Breast epithelium (tissue), 4 donors: ENCODE measurements at regions of chr6 and their contacts with region 1.

Region 1: DNA sequence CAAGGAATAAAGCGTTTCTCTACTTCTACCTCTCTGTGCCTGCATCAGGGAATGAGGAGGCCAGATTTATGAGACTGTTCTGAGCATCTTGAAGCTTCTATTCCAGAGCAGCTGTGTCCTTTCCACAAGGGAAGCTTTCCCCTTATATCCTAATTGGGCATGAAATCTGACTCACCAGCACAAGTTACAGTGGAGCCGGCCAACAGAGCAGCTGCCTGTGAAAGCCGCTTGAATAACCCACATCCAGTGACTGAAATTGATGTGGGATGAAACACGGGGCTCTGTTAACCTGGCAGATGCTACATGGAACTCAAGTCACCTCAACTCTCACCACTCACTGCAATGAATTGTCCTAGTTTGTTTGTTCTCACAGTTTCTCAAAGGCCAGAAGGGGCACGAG is 400.3 kb downstream of the TFAP2A start:
- DNase-seq: no peak
- H3K4me3 ChIP-seq: no peak overlapping the region
- H3K27ac ChIP-seq: no peak overlapping the region
- H3K4me1 ChIP-seq: no peaks in the 10 kb centered on the region
- H3K27me3 ChIP-seq: no peaks in the 10 kb centered on the region
- CTCF ChIP-seq: no peak
- POLR2A ChIP-seq: no peak

Region 2: GRCh38 chr6:9948678-9949077 is 65.9 kb before region 1 on chr6:
- intact Hi-C with region 1: loop called (anchors 5 kb)
- DNase-seq: no peak
- H3K4me3 ChIP-seq: no peak overlapping the region
- H3K27ac ChIP-seq: no peak overlapping the region
- H3K4me1 ChIP-seq: no peaks in the 10 kb centered on the region
- H3K27me3 ChIP-seq: no peaks in the 10 kb centered on the region
- CTCF ChIP-seq: no peak
- POLR2A ChIP-seq: no peak